Activated CD4-positive, alpha-beta memory T cell treated with anti-CD3 and anti-CD28 coated beads for 36 hours (primary cell): ENCODE measurements at regions of chr3 and their contacts with region 1.

Region 1: DNA sequence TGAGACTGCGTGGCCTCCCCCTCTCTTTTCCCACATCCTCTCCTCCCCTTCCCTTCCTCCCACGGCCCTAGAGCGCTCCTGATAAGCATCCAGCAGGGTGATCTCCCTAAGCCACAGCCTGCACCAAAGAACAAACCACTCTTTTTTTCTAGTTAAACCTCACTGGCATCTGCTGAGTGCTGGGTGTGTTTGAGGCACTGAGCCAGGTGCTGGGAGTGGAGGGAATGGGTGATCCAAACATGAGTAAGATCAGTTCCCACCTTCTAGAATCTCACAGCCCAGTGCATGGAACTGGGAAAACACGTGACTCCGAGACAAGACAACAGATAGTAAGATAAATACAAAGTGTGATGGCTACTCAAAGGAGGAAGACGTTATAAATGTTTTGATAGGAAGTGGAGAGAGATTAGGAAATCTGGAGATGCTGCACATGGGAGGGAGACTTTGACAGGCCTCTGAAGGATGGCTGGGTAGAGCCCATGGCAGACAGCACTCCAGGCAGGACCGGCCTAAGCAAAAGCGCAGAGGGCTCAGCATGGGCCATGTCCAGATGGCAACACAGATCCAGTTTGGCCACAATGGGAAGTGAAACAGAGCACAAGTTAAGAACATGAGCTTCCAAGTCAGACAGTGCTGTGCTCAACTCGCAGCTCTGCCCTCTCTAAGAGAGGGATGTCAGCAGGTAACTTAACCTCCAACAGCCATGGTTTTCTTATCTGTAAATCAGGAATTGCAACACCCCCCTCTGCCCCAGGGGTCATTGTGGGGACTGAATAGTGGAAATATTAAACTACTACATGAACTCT is 55.6 kb downstream of the CCR3 start:
- DNase-seq: no peak
- H3K4me3 Mint-ChIP-seq: no peak overlapping the region
- H3K27ac Mint-ChIP-seq: no peak overlapping the region
- H3K4me1 Mint-ChIP-seq: peaks cover 89% of the 10 kb centered on the region
- H3K27me3 Mint-ChIP-seq: peaks cover 8% of the 10 kb centered on the region

Region 2: DNA sequence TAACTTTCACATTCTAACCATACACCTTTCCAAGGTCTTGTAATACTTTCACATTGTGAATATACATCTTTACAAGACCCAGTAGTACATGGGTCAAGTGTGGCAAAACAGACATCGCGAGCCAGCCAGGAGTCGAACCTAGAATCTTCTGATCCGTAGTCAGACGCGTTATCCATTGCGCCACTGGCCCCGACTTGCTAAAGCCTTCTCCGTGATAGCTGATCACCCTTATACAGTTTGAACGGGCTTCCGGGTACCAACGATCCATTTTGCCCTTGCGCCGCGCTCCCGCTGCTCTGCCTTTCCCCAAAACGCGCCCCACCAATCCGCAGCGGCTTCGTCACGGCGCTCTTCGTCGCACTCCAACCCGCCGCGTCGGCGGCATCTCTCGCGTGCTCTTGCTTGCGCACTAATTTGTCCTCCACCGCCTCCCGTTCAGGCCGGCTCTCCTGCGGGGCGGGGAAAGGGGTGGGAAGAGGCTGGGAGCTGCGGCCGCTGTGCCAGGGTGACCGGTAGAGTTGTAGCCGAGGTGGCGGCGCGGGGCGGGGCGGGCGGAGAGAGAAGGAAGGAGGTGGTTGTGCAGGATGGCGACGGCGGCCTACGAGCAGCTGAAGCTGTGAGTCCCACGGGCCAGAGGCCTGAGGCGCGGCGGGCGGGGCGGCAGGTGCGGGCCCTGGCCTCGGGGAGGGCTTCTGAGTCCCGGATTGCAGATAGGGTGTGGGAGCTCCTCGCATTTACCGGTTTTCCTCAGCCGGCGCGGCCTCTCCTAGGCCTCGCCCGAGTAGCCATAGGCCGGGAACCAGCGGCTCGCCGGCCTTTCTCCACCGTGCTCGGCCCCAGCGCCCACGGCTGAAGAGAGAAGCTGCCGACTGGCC is 608.7 kb before region 1 on chr3 and contains the start of gene SACM1L:
- CTCF ChIA-PET with region 1: no interaction called
- POLR2A ChIA-PET with region 1: no interaction called
- intact Hi-C with region 1: loop called (anchors 10 kb)
- DNase-seq: peak; percentile 98
- H3K4me3 Mint-ChIP-seq: peak within 1 kb of the TSS; percentile 75
- H3K27ac Mint-ChIP-seq: peak within 1 kb of the TSS; percentile 85
- H3K4me1 Mint-ChIP-seq: peaks cover 44% of the 10 kb centered on the region
- H3K27me3 Mint-ChIP-seq: peaks cover 4% of the 10 kb centered on the region
- total RNA-seq, gene SACM1L: 64.3 to 71.2 TPM

Region 3: GRCh38 chr3:45938864-45939263 is 359.0 kb before region 1 on chr3:
- CTCF ChIA-PET with region 1: interaction called, 3 read pairs
- POLR2A ChIA-PET with region 1: interaction called, 3 read pairs
- intact Hi-C with region 1: loop called (anchors 10 kb)
- DNase-seq: peak; percentile 91
- H3K4me3 Mint-ChIP-seq: no peak overlapping the region
- H3K27ac Mint-ChIP-seq: no peak overlapping the region
- H3K4me1 Mint-ChIP-seq: peaks cover 34% of the 10 kb centered on the region
- H3K27me3 Mint-ChIP-seq: peaks cover 2% of the 10 kb centered on the region

Region 4: DNA sequence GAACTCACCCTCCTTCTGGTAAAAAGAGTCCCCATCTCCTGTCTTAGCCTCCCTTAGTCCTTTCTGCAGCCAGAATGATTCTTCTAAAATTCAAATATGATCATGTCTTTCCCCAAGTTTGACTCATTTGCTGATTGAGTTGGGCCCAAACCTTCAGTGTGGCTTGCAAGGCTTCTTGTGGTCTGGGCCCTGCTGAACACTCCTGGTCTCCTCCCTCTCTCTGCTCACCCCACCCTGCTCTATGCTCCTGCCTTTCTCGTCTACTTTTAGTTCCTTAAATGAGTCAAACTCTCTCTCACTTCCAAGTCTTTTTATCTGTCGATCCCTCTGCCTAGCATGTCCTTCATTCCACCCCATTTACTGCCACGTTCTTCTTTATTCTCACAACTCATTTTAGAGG is 162.4 kb before region 1 on chr3:
- CTCF ChIA-PET with region 1: no interaction called
- POLR2A ChIA-PET with region 1: no interaction called
- intact Hi-C with region 1: no loop called
- DNase-seq: no peak
- H3K4me3 Mint-ChIP-seq: no peak overlapping the region
- H3K27ac Mint-ChIP-seq: no peak overlapping the region
- H3K4me1 Mint-ChIP-seq: no peaks in the 10 kb centered on the region
- H3K27me3 Mint-ChIP-seq: no peaks in the 10 kb centered on the region

Region 5: GRCh38 chr3:46208167-46208704 is 89.6 kb before region 1 on chr3 and contains the start of gene CCR1:
- CTCF ChIA-PET with region 1: interaction called, 3 read pairs
- POLR2A ChIA-PET with region 1: interaction called, 7 read pairs
- intact Hi-C with region 1: loop called (anchors 1 kb)
- DNase-seq: peak; percentile 81
- H3K4me3 Mint-ChIP-seq: no peak within 1 kb of the TSS
- H3K27ac Mint-ChIP-seq: peak within 1 kb of the TSS; percentile 64
- H3K4me1 Mint-ChIP-seq: peaks cover 17% of the 10 kb centered on the region
- H3K27me3 Mint-ChIP-seq: peaks cover 1% of the 10 kb centered on the region
- total RNA-seq, gene CCR1: 0.80 to 1.3 TPM

Region 6: GRCh38 chr3:46284981-46285683 is 12.7 kb before region 1 on chr3:
- CTCF ChIA-PET with region 1: interaction called, 13 read pairs
- POLR2A ChIA-PET with region 1: interaction called, 31 read pairs
- intact Hi-C with region 1: loop called (anchors 1 kb)
- DNase-seq: peak; percentile 79
- H3K4me3 Mint-ChIP-seq: no peak overlapping the region
- H3K27ac Mint-ChIP-seq: peak overlapping the region; percentile 38
- H3K4me1 Mint-ChIP-seq: peaks cover 79% of the 10 kb centered on the region
- H3K27me3 Mint-ChIP-seq: peaks cover 11% of the 10 kb centered on the region

Region 7: GRCh38 chr3:46359733-46360493 is 62.1 kb after region 1 on chr3:
- CTCF ChIA-PET with region 1: interaction called, 8 read pairs
- POLR2A ChIA-PET with region 1: interaction called, 19 read pairs
- intact Hi-C with region 1: loop called (anchors 2 kb)
- DNase-seq: peak; percentile 67
- H3K4me3 Mint-ChIP-seq: peak overlapping the region; percentile 10
- H3K27ac Mint-ChIP-seq: peak overlapping the region; percentile 60
- H3K4me1 Mint-ChIP-seq: peaks cover 71% of the 10 kb centered on the region
- H3K27me3 Mint-ChIP-seq: peaks cover 20% of the 10 kb centered on the region

Region 8: DNA sequence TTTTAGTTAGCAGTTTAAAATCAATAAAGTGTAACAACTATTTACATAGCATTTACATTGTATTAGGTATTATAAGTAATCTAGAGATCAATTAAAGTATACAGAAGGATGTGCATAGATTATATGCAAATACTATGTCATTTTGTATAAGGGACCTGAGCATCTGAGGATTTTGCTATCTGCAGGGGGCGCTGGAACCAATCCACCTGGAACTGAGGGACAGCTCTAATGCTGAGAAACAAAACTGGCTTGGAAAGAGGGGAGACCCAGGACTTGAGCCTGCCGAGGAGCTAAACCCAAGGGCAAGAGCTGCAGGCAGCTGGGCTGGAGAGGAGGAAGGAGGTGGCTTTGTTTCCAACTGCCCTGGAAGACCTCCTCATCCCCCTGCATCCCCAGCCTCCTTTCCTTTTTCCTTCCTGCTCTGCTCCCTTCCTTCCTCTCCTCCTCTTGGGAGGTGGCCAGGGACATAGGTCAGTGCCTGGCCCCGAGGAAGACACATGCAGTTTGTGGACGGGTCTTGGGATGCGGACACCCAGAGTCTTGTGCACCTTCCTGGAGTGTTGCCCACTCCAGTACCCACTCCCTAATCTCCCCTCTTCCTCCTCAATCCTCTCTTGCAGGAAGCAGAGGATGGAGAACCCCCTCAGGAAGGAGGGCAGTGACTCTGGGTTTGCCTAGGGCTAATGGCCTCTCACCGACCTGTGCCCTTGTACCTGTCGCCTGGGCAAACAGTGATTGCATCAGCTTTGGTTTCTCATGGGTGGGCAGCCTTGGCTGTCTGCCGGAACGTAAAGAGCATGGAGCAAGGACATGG is 199.1 kb after region 1 on chr3:
- CTCF ChIA-PET with region 1: no interaction called
- POLR2A ChIA-PET with region 1: no interaction called
- intact Hi-C with region 1: no loop called
- DNase-seq: peak; percentile 62
- H3K4me3 Mint-ChIP-seq: no peak overlapping the region
- H3K27ac Mint-ChIP-seq: no peak overlapping the region
- H3K4me1 Mint-ChIP-seq: peaks cover 3% of the 10 kb centered on the region
- H3K27me3 Mint-ChIP-seq: no peaks in the 10 kb centered on the region